ENCODE measurements at regions of chr18 and their contacts with region 1.

Region 1: GRCh38 chr18:54269893-54270844 is 852 bp downstream of the POLI start:
- DNase-seq: no peak
- ATAC-seq: peak; percentile 67
- H3K4me3 ChIP-seq: peak overlapping the region; percentile 78
- H3K27ac ChIP-seq: peak overlapping the region; percentile 87
- H3K4me1 ChIP-seq: peaks cover 18% of the 10 kb centered on the region
- H3K27me3 ChIP-seq: no peaks in the 10 kb centered on the region
- CTCF ChIP-seq: peak; percentile 44 to 59 (median 54); a peak in 5 of 6 replicates
- EP300 ChIP-seq: no peak
- POLR2A ChIP-seq: no peak
- RAD21 ChIP-seq: peak; percentile 65

Region 2: DNA sequence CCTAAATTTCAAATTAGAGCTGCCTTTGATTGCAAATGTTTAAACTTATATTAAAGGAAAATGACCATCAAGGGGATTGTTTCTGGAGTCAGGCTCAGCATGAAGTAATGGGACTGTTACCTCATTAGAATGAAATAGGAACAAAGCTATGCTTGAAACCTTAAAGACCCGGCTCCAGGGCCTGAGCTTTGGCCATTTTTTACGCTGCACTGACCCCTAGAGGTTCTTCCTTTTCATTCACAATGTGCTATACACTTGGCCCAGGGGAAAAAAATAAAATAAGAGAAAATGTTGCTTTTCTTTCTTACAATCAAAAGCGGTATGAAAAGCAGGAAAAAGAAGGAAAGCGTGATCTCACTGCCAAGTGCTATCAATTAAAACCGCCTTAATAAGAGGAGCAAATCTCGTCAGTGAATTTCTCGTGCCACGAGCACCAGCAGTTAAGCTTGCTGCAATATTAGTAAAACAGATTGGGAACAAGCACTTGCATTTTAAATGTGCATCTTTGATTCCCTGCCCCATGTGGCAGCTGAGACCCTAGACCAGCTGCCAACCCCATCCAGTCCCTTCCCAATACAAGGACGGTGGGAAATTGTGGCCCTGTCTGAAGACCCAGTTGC is 142.3 kb before region 1 on chr18:
- CTCF ChIA-PET with region 1: interaction called, 29 read pairs
- POLR2A ChIA-PET with region 1: no interaction called
- RAD21 ChIA-PET with region 1: interaction called, 9 read pairs
- SMC1A ChIA-PET with region 1: interaction called, 9 read pairs
- in situ Hi-C with region 1: no loop called
- intact Hi-C with region 1: no loop called
- DNase-seq: no peak
- ATAC-seq: peak; percentile 90
- H3K4me3 ChIP-seq: no peak overlapping the region
- H3K27ac ChIP-seq: no peak overlapping the region
- H3K4me1 ChIP-seq: peaks cover 3% of the 10 kb centered on the region
- H3K27me3 ChIP-seq: no peaks in the 10 kb centered on the region
- CTCF ChIP-seq: peak; percentile 54 to 65 (median 57); a peak in 5 of 6 replicates
- EP300 ChIP-seq: no peak
- POLR2A ChIP-seq: no peak
- RAD21 ChIP-seq: peak; percentile 78

Region 3: DNA sequence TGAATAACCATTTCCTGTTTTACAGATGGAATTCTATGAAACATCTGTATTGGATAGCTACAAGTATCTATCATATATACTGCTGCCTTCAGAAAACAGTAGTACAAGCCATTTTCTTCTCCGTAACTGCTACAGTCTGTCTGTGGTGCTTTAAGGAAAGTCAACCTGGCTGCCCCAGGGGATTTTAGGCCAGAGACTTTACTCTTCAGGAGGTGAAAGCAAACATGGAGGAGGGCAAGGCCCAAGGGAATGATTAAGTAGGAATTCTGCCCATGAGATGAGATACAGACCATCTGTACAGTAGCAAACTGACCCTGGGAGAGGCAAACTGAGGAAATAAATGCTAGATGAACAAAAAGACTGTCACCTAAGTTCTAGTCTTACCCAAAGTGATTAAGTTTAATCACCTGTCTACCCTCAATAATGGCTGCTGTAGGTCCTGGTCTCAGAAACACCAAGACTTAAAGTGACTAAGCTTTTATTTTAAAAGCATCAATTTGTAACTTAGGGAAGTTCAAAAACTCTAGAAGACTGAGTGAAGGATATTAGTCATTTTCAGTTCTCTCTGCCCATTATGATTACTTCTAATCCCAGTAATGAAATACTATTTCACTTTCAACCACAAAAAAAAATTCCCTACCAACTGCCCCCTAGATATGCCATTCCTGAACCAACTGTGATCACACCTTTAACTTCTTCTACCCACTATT is 60.5 kb before region 1 on chr18:
- CTCF ChIA-PET with region 1: interaction called, 25 read pairs
- POLR2A ChIA-PET with region 1: interaction called, 17 read pairs
- RAD21 ChIA-PET with region 1: interaction called, 34 read pairs
- SMC1A ChIA-PET with region 1: interaction called, 18 read pairs
- in situ Hi-C with region 1: no loop called
- intact Hi-C with region 1: no loop called
- DNase-seq: peak; percentile 61
- ATAC-seq: peak; percentile 83
- H3K4me3 ChIP-seq: peak overlapping the region; percentile 64
- H3K27ac ChIP-seq: peak overlapping the region; percentile 98
- H3K4me1 ChIP-seq: peaks cover 32% of the 10 kb centered on the region
- H3K27me3 ChIP-seq: no peaks in the 10 kb centered on the region
- CTCF ChIP-seq: no peak
- EP300 ChIP-seq: peak; percentile 94 to 97
- POLR2A ChIP-seq: no peak
- RAD21 ChIP-seq: no peak

Region 4: DNA sequence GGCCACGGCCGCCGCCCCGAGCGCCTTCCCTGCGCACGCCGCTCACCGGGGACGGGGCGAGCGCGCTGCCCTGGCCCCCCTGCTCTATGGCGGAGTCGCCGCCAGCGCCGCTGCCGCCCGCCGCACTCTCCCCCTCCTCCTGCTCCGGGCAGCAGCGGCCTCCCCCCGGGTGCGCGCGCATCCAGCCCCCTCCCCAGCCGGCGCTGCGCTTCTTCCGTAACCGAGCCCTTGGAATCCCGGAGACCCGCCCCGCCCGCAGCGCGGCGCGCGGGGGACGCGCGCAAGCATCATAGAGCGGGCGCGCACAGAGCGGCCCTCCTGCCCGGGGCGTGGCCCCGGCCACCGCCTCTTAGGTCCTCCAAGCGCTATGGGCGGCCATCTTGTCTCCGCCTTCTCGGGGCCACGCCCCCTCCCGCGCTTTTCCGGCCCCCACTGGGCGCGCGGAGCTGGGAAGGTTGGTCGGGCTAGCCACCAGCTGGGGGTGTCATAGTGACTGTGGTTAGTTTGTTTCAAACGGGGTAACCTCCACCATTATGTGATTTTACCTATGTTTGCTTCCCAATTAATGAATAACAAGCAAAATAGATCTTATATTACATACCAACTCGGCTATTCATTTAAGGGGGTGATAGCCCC is 45.7 kb before region 1 on chr18 and contains the start of gene MBD2:
- CTCF ChIA-PET with region 1: interaction called, 97 read pairs
- POLR2A ChIA-PET with region 1: interaction called, 16 read pairs
- RAD21 ChIA-PET with region 1: interaction called, 82 read pairs
- SMC1A ChIA-PET with region 1: interaction called, 219 read pairs
- in situ Hi-C with region 1: no loop called
- intact Hi-C with region 1: loop called (anchors 1 kb)
- DNase-seq: peak; percentile 76
- ATAC-seq: peak; percentile 84
- H3K4me3 ChIP-seq: peak within 1 kb of the TSS; percentile 77
- H3K27ac ChIP-seq: peak within 1 kb of the TSS; percentile 88
- H3K4me1 ChIP-seq: no peaks in the 10 kb centered on the region
- H3K27me3 ChIP-seq: no peaks in the 10 kb centered on the region
- CTCF ChIP-seq: peak; percentile 10 to 39 (median 23); a peak in 1 of 6 replicates
- EP300 ChIP-seq: no peak
- POLR2A ChIP-seq: peak; percentile 72
- RAD21 ChIP-seq: peak; percentile 49; the same call in 1 of the 2 replicates
- polyA plus RNA-seq, gene MBD2: 27.0 to 53.5 TPM

Region 5: GRCh38 chr18:54247511-54248175 is 22.5 kb before region 1 on chr18:
- CTCF ChIA-PET with region 1: interaction called, 14 read pairs
- POLR2A ChIA-PET with region 1: interaction called, 4 read pairs
- RAD21 ChIA-PET with region 1: interaction called, 26 read pairs
- SMC1A ChIA-PET with region 1: interaction called, 15 read pairs
- in situ Hi-C with region 1: no loop called
- intact Hi-C with region 1: no loop called
- DNase-seq: no peak
- ATAC-seq: no peak
- H3K4me3 ChIP-seq: no peak overlapping the region
- H3K27ac ChIP-seq: peak overlapping the region; percentile 23
- H3K4me1 ChIP-seq: peaks cover 34% of the 10 kb centered on the region
- H3K27me3 ChIP-seq: no peaks in the 10 kb centered on the region
- CTCF ChIP-seq: no peak
- EP300 ChIP-seq: no peak
- POLR2A ChIP-seq: no peak
- RAD21 ChIP-seq: no peak

Region 6: GRCh38 chr18:54330768-54331548 is 60.8 kb after region 1 on chr18:
- CTCF ChIA-PET with region 1: interaction called, 16 read pairs
- POLR2A ChIA-PET with region 1: no interaction called
- RAD21 ChIA-PET with region 1: interaction called, 10 read pairs
- SMC1A ChIA-PET with region 1: interaction called, 12 read pairs
- in situ Hi-C with region 1: no loop called
- intact Hi-C with region 1: no loop called
- DNase-seq: no peak
- ATAC-seq: peak; percentile 42; the same call in 2 of the 3 replicates
- H3K4me3 ChIP-seq: no peak overlapping the region
- H3K27ac ChIP-seq: no peak overlapping the region
- H3K4me1 ChIP-seq: no peaks in the 10 kb centered on the region
- H3K27me3 ChIP-seq: no peaks in the 10 kb centered on the region
- CTCF ChIP-seq: no peak; a peak in 1 of 6 replicates
- EP300 ChIP-seq: no peak
- POLR2A ChIP-seq: no peak
- RAD21 ChIP-seq: no peak

Region 7: DNA sequence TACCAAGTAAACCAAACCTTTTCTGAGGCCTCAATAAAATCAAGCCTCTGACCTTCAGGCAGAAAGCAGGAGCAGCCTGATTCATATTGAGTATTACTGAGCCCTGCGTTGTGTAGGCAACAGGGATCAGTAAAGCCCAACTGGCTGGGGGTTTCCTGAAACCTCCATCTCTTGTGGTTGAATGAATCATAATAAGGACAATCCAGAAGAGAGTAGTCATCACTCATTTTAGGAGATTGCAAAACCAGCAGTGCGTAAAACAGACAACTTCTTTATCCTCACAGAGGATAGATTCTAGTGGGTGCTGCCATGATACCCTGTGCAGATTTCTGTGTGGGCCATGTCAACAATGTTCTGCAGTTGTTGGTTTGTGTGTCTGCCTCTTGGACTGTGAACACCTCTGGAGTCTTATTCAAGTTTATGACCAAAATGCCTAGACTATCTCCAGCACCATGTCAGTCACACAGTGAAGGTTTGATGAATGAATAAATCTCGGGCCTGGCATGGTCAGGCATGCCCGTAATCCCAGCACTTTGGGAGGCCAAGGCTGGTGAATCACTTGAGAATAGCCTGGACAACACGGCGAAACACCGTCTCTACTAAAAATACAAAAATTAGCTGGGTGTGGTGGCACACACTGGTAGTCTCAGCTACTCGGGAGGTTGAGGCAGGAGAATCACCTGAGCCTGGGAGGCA is 506.3 kb after region 1 on chr18:
- CTCF ChIA-PET with region 1: no interaction called
- POLR2A ChIA-PET with region 1: no interaction called
- RAD21 ChIA-PET with region 1: no interaction called
- SMC1A ChIA-PET with region 1: no interaction called
- in situ Hi-C with region 1: no loop called
- intact Hi-C with region 1: no loop called
- DNase-seq: peak; percentile 12
- ATAC-seq: peak; percentile 88
- H3K4me3 ChIP-seq: no peak overlapping the region
- H3K27ac ChIP-seq: no peak overlapping the region
- H3K4me1 ChIP-seq: no peaks in the 10 kb centered on the region
- H3K27me3 ChIP-seq: no peaks in the 10 kb centered on the region
- CTCF ChIP-seq: no peak
- EP300 ChIP-seq: no peak
- POLR2A ChIP-seq: no peak
- RAD21 ChIP-seq: no peak

Region 8: GRCh38 chr18:55322178-55322735 is 1052.1 kb after region 1 on chr18:
- CTCF ChIA-PET with region 1: no interaction called
- POLR2A ChIA-PET with region 1: no interaction called
- RAD21 ChIA-PET with region 1: no interaction called
- SMC1A ChIA-PET with region 1: interaction called, 4 read pairs
- in situ Hi-C with region 1: loop called (anchors 25 kb)
- intact Hi-C with region 1: loop called (anchors 10 kb)
- DNase-seq: peak; percentile 74
- ATAC-seq: peak; percentile 66
- H3K4me3 ChIP-seq: peak overlapping the region; percentile 91
- H3K27ac ChIP-seq: peak overlapping the region; percentile 84
- H3K4me1 ChIP-seq: no peaks in the 10 kb centered on the region
- H3K27me3 ChIP-seq: no peaks in the 10 kb centered on the region
- CTCF ChIP-seq: no peak
- EP300 ChIP-seq: 0 out of 4 replicates have a peak, but pooled peaks of 1 of the 2 experiments have one; percentile 13
- POLR2A ChIP-seq: peak; percentile 80
- RAD21 ChIP-seq: no peak

Measured in GM12878 (cell line).